ENCODE measurements at regions of chrX and their contacts with region 1.

Region 1: DNA sequence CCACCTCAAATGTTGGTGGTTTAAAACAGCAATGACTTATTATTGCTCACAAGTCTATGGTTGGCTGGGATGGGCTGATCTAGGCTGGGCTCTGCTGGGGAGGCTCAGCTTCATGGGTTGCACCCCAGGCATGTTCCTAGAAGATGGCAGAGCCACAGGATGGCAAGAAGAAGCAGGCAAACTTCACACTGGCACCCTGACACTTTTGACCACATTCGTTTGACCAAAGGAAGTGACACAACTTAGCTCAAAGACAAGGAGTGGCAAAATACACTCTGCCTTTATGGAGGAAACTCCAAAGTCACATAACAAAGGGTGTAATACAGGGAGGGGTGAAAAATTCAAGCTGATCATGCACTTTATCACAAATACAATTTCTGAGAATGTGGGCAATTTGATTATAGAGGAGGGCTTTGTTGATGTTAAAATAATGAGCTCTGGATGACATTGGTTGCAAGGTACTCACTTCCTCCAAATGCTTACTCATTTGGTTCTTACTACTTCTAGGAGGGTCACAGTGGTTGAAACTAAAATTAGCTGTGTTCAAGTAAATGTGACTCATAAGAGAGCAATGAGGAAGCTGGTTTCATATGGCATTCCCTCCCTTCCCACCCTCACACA is 249.2 kb upstream of the RPS6KA3 start:
- DNase-seq: peak; percentile 47
- ATAC-seq: peak; percentile 85
- H3K4me3 Mint-ChIP-seq: no peak overlapping the region
- H3K27ac Mint-ChIP-seq: peak overlapping the region; percentile 42
- H3K4me1 Mint-ChIP-seq: peaks cover 30% of the 10 kb centered on the region
- H3K27me3 Mint-ChIP-seq: peaks cover 25% of the 10 kb centered on the region

Region 2: GRCh38 chrX:20205927-20206708 is 309.8 kb before region 1 on chrX:
- CTCF ChIA-PET with region 1: no interaction called
- POLR2A ChIA-PET with region 1: no interaction called
- intact Hi-C with region 1: no loop called
- DNase-seq: peak; percentile 9
- ATAC-seq: peak; percentile 42
- H3K4me3 Mint-ChIP-seq: no peak overlapping the region
- H3K27ac Mint-ChIP-seq: peak overlapping the region; percentile 27
- H3K4me1 Mint-ChIP-seq: peaks cover 42% of the 10 kb centered on the region
- H3K27me3 Mint-ChIP-seq: no peaks in the 10 kb centered on the region

Region 3: GRCh38 chrX:20252381-20253231 is 263.3 kb before region 1 on chrX:
- CTCF ChIA-PET with region 1: interaction called, 3 read pairs
- POLR2A ChIA-PET with region 1: no interaction called
- intact Hi-C with region 1: loop called in 1 of 2 experiments (anchors 2 kb)
- DNase-seq: peak; percentile 76
- ATAC-seq: peak; percentile 90
- H3K4me3 Mint-ChIP-seq: no peak overlapping the region
- H3K27ac Mint-ChIP-seq: peak overlapping the region; percentile 78
- H3K4me1 Mint-ChIP-seq: peaks cover 47% of the 10 kb centered on the region
- H3K27me3 Mint-ChIP-seq: no peaks in the 10 kb centered on the region

Region 4: GRCh38 chrX:20352935-20353336 is 163.0 kb before region 1 on chrX:
- CTCF ChIA-PET with region 1: no interaction called
- POLR2A ChIA-PET with region 1: no interaction called
- intact Hi-C with region 1: loop called in 1 of 2 experiments (anchors 2 kb)
- DNase-seq: peak; percentile 8
- ATAC-seq: peak; percentile 72
- H3K4me3 Mint-ChIP-seq: no peak overlapping the region
- H3K27ac Mint-ChIP-seq: no peak overlapping the region
- H3K4me1 Mint-ChIP-seq: peaks cover 26% of the 10 kb centered on the region
- H3K27me3 Mint-ChIP-seq: peaks cover 4% of the 10 kb centered on the region

Region 5: GRCh38 chrX:20452487-20452886 is 63.5 kb before region 1 on chrX:
- CTCF ChIA-PET with region 1: no interaction called
- POLR2A ChIA-PET with region 1: no interaction called
- intact Hi-C with region 1: loop called (anchors 5 kb)
- DNase-seq: no peak
- ATAC-seq: peak; percentile 68
- H3K4me3 Mint-ChIP-seq: no peak overlapping the region
- H3K27ac Mint-ChIP-seq: peak overlapping the region; percentile 37
- H3K4me1 Mint-ChIP-seq: peaks cover 16% of the 10 kb centered on the region
- H3K27me3 Mint-ChIP-seq: no peaks in the 10 kb centered on the region

Region 6: GRCh38 chrX:20481632-20482031 is 34.3 kb before region 1 on chrX:
- CTCF ChIA-PET with region 1: no interaction called
- POLR2A ChIA-PET with region 1: no interaction called
- intact Hi-C with region 1: no loop called
- DNase-seq: no peak
- ATAC-seq: no peak
- H3K4me3 Mint-ChIP-seq: no peak overlapping the region
- H3K27ac Mint-ChIP-seq: no peak overlapping the region
- H3K4me1 Mint-ChIP-seq: no peaks in the 10 kb centered on the region
- H3K27me3 Mint-ChIP-seq: no peaks in the 10 kb centered on the region

Region 7: GRCh38 chrX:21972721-21973120 is 1456.8 kb after region 1 on chrX:
- CTCF ChIA-PET with region 1: no interaction called
- POLR2A ChIA-PET with region 1: no interaction called
- intact Hi-C with region 1: loop called in 1 of 2 experiments (anchors 5 kb)
- DNase-seq: peak; percentile 68
- ATAC-seq: peak; percentile 81
- H3K4me3 Mint-ChIP-seq: no peak overlapping the region
- H3K27ac Mint-ChIP-seq: peak overlapping the region; percentile 88
- H3K4me1 Mint-ChIP-seq: peaks cover 38% of the 10 kb centered on the region
- H3K27me3 Mint-ChIP-seq: no peaks in the 10 kb centered on the region

Measured in activated CD4-positive, alpha-beta T cell treated with anti-CD3 and anti-CD28 coated beads for 36 hours (primary cell).